ENCODE measurements at regions of chr15 and their contacts with region 1.

Region 1: GRCh38 chr15:29765898-29766527 is 56.3 kb downstream of the TJP1 start:
- DNase-seq: no peak
- ATAC-seq: no peak
- H3K4me3 ChIP-seq: no peak overlapping the region
- H3K27ac ChIP-seq: no peak overlapping the region
- H3K4me1 ChIP-seq: no peaks in the 10 kb centered on the region; the same call in none of the 2 replicates
- H3K27me3 ChIP-seq: no peaks in the 10 kb centered on the region
- CTCF ChIP-seq: no peak
- POLR2A ChIP-seq: no peak
- RAD21 ChIP-seq: no peak

Region 2: DNA sequence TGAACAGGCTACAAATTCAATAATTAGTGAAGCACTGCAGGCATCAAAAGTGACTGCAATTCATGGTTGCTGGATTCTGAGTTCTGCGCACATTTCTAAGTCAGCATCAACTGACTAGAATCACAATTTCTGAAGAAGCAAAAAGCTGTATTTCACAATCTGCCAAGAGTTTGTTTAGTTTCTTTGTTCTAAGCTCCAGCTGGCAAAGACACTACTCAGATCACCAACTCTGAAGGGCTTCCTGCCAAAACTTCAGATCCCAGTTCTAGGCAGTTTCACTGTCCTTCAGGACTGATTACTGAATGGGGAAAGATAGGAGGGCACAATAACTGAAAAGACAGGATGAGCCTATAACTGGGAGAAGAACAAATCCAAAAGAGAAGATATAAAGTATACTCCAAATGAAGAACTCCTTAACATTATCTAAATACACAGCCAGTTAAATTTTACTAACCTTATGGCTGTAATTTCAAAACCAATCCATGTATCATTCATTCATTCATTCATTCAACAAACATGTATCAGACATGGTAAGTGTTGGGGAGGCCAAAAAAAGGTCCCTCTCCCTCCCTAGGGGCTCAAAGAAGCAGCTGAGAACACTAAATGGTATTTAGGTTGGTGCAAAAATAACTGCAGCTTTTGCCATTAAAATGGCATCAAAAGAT is 39.2 kb after region 1 on chr15:
- CTCF ChIA-PET with region 1: no interaction called
- POLR2A ChIA-PET with region 1: no interaction called
- dilution Hi-C with region 1: no loop called
- in situ Hi-C with region 1: no loop called
- intact Hi-C with region 1: loop called (anchors 5 kb)
- DNase-seq: peak; percentile 87
- ATAC-seq: peak; percentile 67
- H3K4me3 ChIP-seq: no peak overlapping the region
- H3K27ac ChIP-seq: no peak overlapping the region
- H3K4me1 ChIP-seq: peaks cover 8% of the 10 kb centered on the region; the same call in 1 of the 2 replicates
- H3K27me3 ChIP-seq: no peaks in the 10 kb centered on the region
- CTCF ChIP-seq: no peak
- POLR2A ChIP-seq: no peak
- RAD21 ChIP-seq: no peak